ENCODE measurements at regions of chr14 and their contacts with region 1.

Region 1: DNA sequence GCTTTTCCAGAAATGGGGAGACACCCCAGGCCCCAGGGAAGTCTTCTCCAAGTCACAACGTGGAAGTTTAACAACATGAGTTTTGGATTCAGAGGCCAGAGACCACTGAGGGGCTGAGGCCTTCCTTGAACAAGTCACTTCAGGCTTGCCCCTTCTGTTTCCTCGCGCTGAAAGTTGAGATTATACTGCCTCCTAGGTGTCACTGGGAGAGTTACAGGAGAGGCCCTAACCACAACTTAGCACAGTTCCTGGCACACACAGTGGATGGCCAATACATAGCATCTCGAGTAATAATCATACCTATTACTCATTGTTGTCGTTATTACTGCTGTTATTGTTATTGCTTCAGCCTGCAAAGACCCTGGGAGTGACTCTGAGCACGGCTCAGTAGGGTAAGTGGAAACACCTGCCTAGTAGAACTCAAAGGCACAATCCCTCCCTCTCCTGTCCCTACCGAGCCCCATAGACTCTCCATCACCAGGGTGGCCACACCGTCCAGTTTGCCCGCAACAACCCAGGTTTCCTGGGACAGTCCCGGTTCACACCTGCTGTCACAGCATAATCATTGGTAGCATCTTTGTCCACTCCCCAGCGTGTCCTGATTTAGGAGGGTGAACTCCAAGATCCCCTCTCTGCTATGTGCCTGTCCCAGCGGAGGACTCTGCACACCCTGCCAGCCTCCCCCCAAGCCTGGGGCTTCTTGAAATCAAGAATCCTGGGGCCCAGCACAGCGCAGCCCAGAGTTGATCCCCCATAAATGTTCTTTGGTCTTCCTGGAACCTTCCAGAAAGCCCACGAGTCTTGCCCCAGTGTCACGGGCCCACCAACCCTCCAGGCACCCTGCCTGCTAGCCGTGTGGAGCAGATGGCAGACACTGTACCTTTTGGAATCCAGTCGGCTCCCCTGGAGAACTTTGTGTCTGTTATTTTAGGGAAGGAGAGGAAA is 85.0 kb downstream of the SYNE3 start:
- DNase-seq: no peak
- ATAC-seq: peak; percentile 8 to 74 (median 58)
- H3K4me3 ChIP-seq: no peak overlapping the region
- H3K27ac ChIP-seq: peak overlapping the region in 6 of 12 donors; percentile 4 to 55 (median 36)
- H3K4me1 ChIP-seq: peaks cover 0 to 16% (median 0%) of the 10 kb centered on the region in 12 donors
- H3K27me3 ChIP-seq: no peaks in the 10 kb centered on the region
- CTCF ChIP-seq: peak; percentile 41 to 71 (median 50)
- POLR2A ChIP-seq: no peak

Region 2: GRCh38 chr14:94769391-94770250 is 661.9 kb before region 1 on chr14 and contains the start of gene GSC:
- intact Hi-C with region 1: no loop called
- DNase-seq: peak in 4 of 5 donors; percentile 42 to 56 (median 46)
- ATAC-seq: peak in 3 of 4 donors; percentile 66 to 83 (median 69)
- H3K4me3 ChIP-seq: peak within 1 kb of the TSS; percentile 31 to 68 (median 55)
- H3K27ac ChIP-seq: peak within 1 kb of the TSS in 1 of 12 donors; percentile 58
- H3K4me1 ChIP-seq: peaks cover 0 to 47% (median 16%) of the 10 kb centered on the region in 12 donors
- H3K27me3 ChIP-seq: peaks cover 69 to 100% (median 98%) of the 10 kb centered on the region in 9 donors
- CTCF ChIP-seq: no peak
- POLR2A ChIP-seq: no peak
- total RNA-seq, gene GSC: 0.22 to 1.3 (median 0.37) TPM in 5 of 9 donors, not detected in the others

Region 3: GRCh38 chr14:94904636-94905035 is 526.8 kb before region 1 on chr14:
- intact Hi-C with region 1: loop called in 3 of 10 experiments (anchors 10 kb)
- DNase-seq: no peak
- ATAC-seq: no peak
- H3K4me3 ChIP-seq: no peak overlapping the region
- H3K27ac ChIP-seq: no peak overlapping the region
- H3K4me1 ChIP-seq: no peaks in the 10 kb centered on the region
- H3K27me3 ChIP-seq: peaks cover 0 to 9% (median 0%) of the 10 kb centered on the region in 9 donors
- CTCF ChIP-seq: no peak
- POLR2A ChIP-seq: no peak

Region 4: DNA sequence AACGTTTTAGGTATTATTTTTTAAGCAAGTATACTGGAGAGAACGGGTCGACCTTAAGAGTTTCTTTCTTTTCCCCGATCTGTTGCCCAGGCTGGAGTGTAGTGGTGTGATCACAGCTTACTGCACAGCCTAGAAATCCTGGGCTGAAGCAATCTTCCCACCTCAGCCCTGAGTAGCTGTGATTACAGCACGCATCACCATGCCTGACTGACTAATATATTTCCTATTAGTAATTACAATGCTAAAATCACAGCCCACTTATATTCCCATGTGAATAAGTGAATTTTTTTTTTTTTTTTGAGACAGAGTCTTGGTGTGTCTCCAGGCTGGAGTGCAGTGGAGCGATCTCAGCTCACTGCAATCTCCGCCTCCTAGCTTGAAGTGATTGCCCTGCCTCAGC is 324.5 kb before region 1 on chr14:
- intact Hi-C with region 1: loop called in 6 of 10 experiments (anchors 5 to 10 kb)
- DNase-seq: no peak
- ATAC-seq: no peak
- H3K4me3 ChIP-seq: no peak overlapping the region
- H3K27ac ChIP-seq: no peak overlapping the region
- H3K4me1 ChIP-seq: peaks cover 0 to 6% (median 0%) of the 10 kb centered on the region in 12 donors
- H3K27me3 ChIP-seq: no peaks in the 10 kb centered on the region
- CTCF ChIP-seq: no peak
- POLR2A ChIP-seq: no peak

Region 5: GRCh38 chr14:95196290-95196689 is 235.2 kb before region 1 on chr14:
- intact Hi-C with region 1: loop called in 1 of 10 experiments (anchors 10 kb)
- DNase-seq: no peak
- ATAC-seq: no peak
- H3K4me3 ChIP-seq: no peak overlapping the region
- H3K27ac ChIP-seq: no peak overlapping the region
- H3K4me1 ChIP-seq: peaks cover 0 to 12% (median 0%) of the 10 kb centered on the region in 12 donors
- H3K27me3 ChIP-seq: peaks cover 0 to 26% (median 0%) of the 10 kb centered on the region in 9 donors
- CTCF ChIP-seq: peak in 11 of 12 donors; percentile 15 to 57 (median 34)
- POLR2A ChIP-seq: no peak

Measured in heart left ventricle (tissue), 16 donors.